Right ventricle myocardium inferior (tissue), 1 donor: ENCODE measurements at regions of chr4 and their contacts with region 1.

Region 1: GRCh38 chr4:122758033-122758432 is 25.5 kb downstream of the BBS12 start:
- DNase-seq: no peak
- ATAC-seq: no peak

Region 2: GRCh38 chr4:121960818-121961217 is 797.2 kb before region 1 on chr4:
- intact Hi-C with region 1: no loop called
- DNase-seq: no peak
- ATAC-seq: no peak

Region 3: DNA sequence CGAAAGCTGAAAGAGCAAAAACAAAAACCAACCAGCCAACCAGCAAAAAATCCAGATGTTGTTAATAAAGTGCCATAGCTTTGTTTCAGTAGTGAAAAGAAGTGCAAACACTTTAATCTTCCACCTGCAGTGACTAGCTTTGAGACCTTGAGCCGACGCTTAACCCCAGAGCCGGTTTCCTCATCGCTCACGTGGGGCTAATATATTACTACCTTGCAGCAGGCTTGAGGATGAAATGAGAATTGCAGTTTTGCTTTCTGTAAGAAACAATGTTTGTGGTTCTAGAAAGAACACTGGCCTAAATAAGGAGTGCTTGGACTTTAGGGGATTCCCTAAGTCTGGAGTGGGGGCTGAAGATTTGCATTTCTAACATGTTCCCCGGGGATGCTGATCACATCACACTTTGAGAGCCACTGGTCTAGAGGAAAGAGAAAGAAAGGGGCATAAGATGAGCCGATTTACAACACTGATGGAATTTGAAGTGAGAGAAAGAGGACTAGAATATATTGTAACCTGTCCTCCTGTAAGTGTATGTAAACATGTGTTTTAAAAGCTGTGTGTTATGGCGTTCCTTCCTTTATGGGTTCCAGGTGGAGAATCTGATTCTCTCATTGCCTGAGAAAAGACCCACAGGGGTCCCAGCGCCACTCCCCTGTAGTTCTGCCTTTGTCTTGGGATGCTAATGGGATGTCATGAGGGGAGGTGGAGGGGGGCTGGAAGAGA is 70.0 kb after region 1 on chr4:
- intact Hi-C with region 1: loop called (anchors 5 kb)
- DNase-seq: no peak
- ATAC-seq: no peak

Region 4: DNA sequence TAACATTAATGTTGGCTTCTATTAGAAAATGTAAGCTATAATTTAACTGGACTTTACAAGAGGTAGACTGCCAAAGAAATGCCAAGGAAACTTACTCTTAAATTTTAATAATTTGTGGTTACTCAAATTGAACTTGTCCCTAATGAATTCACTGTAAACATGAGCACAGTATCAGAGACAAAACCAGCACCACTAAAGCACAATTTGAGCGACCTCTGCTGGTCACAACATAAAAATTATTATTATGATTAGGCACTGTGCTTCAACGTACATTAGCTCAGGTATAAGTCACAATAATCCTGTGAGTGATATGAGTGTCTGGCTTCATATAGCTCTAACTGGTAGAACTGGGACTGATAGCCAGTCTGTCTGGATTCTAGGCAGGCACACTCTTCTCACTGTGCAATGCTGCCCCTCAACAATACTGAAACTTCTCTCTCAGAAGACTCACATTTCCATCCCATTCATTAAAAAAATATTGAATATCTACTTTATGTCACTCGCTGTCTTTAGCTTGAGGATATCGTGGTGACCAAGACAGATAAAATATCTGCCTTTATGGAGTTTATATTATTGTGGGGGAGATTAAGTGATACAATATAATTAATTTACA is 156.4 kb after region 1 on chr4:
- intact Hi-C with region 1: loop called (anchors 2 kb)
- DNase-seq: no peak
- ATAC-seq: peak; percentile 60